Heart left ventricle (tissue), 16 donors: ENCODE measurements at regions of chr2 and their contacts with region 1.

Region 1: GRCh38 chr2:237691908-237692600 is 64.7 kb downstream of the LRRFIP1 start:
- DNase-seq: peak; percentile 96 to 99 (median 97)
- ATAC-seq: peak; percentile 53 to 84 (median 74)
- H3K4me3 ChIP-seq: peak overlapping the region; percentile 60 to 98 (median 86)
- H3K27ac ChIP-seq: peak overlapping the region; percentile 80 to 98 (median 92)
- H3K4me1 ChIP-seq: peaks cover 13 to 91% (median 78%) of the 10 kb centered on the region in 12 donors
- H3K27me3 ChIP-seq: no peaks in the 10 kb centered on the region
- CTCF ChIP-seq: peak in 2 of 12 donors; percentile 10 to 11
- POLR2A ChIP-seq: peak in 1 of 2 donors; percentile 54

Region 2: GRCh38 chr2:237723602-237724001 is 31.5 kb after region 1 on chr2:
- intact Hi-C with region 1: loop called in 1 of 10 experiments (anchors 2 kb)
- DNase-seq: peak in 1 of 5 donors; percentile 72
- ATAC-seq: peak in 3 of 4 donors; percentile 54 to 71 (median 65)
- H3K4me3 ChIP-seq: no peak overlapping the region
- H3K27ac ChIP-seq: peak overlapping the region in 2 of 12 donors; percentile 22 to 27
- H3K4me1 ChIP-seq: peaks cover 10 to 84% (median 71%) of the 10 kb centered on the region in 12 donors
- H3K27me3 ChIP-seq: no peaks in the 10 kb centered on the region
- CTCF ChIP-seq: no peak
- POLR2A ChIP-seq: no peak

Region 3: DNA sequence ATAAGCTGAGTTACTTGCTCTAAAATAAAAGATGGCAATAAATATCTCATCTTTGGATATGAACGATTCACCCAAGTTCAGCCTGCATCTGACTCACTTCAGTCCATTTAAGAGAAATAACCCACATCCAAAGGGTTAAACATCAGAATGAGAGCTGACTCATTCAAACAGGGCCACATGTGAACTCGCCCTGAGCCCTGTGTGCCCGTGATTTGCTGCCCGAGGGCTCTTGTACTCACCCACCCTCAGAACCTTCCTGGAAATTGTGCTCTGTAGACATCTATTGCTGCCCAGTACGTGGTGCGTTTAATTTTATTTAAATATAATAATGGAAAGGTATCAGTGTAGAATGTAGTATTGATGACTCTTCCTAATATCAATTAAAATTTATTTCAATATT is 39.6 kb after region 1 on chr2:
- intact Hi-C with region 1: loop called in 7 of 10 experiments (anchors 2 to 5 kb)
- DNase-seq: no peak
- ATAC-seq: peak in 3 of 4 donors; percentile 23 to 49 (median 32)
- H3K4me3 ChIP-seq: peak overlapping the region in 2 of 12 donors; percentile 20 to 48
- H3K27ac ChIP-seq: peak overlapping the region in 11 of 12 donors; percentile 78 to 86 (median 84)
- H3K4me1 ChIP-seq: peaks cover 8 to 100% (median 82%) of the 10 kb centered on the region in 12 donors
- H3K27me3 ChIP-seq: no peaks in the 10 kb centered on the region
- CTCF ChIP-seq: no peak
- POLR2A ChIP-seq: no peak

Region 4: DNA sequence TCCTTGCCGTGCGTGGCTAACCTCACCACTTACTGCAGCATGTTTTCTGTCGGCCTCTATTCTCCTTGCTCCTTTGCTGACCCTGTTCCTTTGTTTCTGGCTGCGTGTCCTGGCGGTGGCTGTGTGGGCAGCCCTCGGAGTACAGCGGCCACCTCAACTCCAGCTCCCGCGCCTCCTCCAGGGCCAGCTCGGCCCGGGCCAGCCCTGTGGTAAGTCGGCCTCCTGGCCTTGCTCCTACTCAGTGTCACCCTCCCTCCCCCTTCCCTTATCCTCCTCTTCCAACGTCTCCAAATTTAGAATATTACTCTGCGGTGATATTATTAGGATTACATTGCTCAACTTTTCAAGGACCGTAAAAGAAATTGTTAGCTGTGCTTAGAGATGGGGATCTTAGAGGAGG is 47.0 kb after region 1 on chr2:
- intact Hi-C with region 1: loop called in 7 of 10 experiments (anchors 2 to 5 kb)
- DNase-seq: peak; percentile 71 to 86 (median 85)
- ATAC-seq: peak; percentile 92 to 95 (median 93)
- H3K4me3 ChIP-seq: peak overlapping the region in 1 of 12 donors; percentile 4
- H3K27ac ChIP-seq: peak overlapping the region; percentile 45 to 86 (median 80)
- H3K4me1 ChIP-seq: peaks cover 0 to 99% (median 90%) of the 10 kb centered on the region in 12 donors
- H3K27me3 ChIP-seq: no peaks in the 10 kb centered on the region
- CTCF ChIP-seq: peak in 3 of 12 donors; percentile 17 to 27 (median 18)
- POLR2A ChIP-seq: no peak